Tibial artery (tissue), 4 donors: ENCODE measurements at regions of chr1 and their contacts with region 1.

Region 1: DNA sequence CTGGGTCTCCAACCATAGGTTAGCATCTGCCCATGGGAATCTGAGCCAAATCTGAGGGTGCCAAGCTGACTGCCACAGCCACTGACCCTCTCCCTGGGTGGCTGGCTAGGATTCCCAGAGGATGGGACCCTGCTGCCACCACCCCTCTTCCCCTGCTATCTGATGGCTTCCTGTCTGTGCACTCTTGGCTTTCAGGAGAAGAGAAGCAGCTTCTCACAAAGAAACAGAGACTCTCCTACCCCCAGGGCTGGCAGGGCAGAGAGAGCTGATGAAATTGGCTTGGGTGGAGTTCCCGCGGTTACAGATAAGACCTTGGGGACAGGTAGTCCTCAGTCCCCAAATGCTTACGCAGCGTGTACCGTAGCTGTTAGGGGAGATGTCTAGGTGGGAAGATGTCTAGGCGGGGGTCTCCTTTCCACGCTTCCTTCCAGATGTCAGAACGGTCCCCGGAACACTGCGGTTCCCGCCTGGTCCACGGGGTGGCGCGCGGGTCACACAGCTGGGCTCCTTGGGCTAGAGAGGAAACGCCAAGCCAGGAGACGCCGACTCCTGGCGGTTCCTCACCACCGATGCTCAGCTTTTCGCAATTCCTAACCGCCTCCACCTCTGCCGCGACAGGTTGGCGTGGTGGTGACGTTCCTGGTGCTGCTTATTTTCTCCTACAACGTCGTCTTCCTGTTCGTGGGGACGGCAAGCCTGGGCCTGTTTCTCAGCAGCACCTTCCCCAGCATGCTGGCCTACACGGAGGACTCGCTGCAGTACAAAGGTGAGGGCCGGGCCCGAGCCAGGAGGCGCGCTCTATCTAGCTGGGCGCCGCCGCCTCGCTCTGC is 40.1 kb downstream of the ELK4 start:
- DNase-seq: peak; percentile 87 to 90
- H3K4me3 ChIP-seq: peak overlapping the region; percentile 34 to 46
- H3K27ac ChIP-seq: no peak overlapping the region
- H3K4me1 ChIP-seq: peaks cover 0 to 9% (median 3%) of the 10 kb centered on the region in 4 donors
- H3K27me3 ChIP-seq: no peaks in the 10 kb centered on the region
- CTCF ChIP-seq: peak; percentile 98 to 99

Region 2: GRCh38 chr1:205631727-205632373 is 40.1 kb after region 1 on chr1 and contains the start of gene ELK4:
- intact Hi-C with region 1: loop called (anchors 1 kb)
- DNase-seq: peak; percentile 98 to 99
- H3K4me3 ChIP-seq: peak within 1 kb of the TSS; percentile 76 to 86
- H3K27ac ChIP-seq: peak within 1 kb of the TSS; percentile 96 to 99
- H3K4me1 ChIP-seq: peaks cover 0 to 44% (median 26%) of the 10 kb centered on the region in 4 donors
- H3K27me3 ChIP-seq: no peaks in the 10 kb centered on the region
- CTCF ChIP-seq: peak; percentile 67 to 75